PC-3 (cell line): ENCODE measurements at regions of chr4 and their contacts with region 1.

Region 1: DNA sequence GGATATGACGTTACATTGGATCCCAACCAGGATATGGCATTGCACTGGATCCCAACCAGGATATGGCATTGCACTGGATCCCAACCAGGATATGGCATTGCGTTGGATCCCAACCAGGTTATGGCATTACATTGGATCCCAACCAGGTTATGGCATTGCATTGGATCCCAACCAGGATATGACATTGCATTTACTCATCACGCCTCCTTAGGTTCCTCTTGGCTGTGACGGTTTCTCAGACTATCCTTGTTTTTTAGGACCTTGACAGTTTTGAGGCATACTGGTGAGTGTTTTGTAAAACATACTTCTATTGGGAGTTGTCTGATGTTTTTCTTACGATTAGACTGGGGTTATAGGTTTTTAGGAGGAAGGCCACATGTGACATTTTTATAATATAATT is 5.4 kb upstream of the ACSL1 start:
- DNase-seq: peak; percentile 86
- ATAC-seq: peak; percentile 72
- H3K4me3 ChIP-seq: no peak overlapping the region
- H3K27ac ChIP-seq: peak overlapping the region; percentile 76
- H3K4me1 ChIP-seq: peaks cover 14% of the 10 kb centered on the region
- H3K27me3 ChIP-seq: no peaks in the 10 kb centered on the region
- CTCF ChIP-seq: no peak

Region 2: DNA sequence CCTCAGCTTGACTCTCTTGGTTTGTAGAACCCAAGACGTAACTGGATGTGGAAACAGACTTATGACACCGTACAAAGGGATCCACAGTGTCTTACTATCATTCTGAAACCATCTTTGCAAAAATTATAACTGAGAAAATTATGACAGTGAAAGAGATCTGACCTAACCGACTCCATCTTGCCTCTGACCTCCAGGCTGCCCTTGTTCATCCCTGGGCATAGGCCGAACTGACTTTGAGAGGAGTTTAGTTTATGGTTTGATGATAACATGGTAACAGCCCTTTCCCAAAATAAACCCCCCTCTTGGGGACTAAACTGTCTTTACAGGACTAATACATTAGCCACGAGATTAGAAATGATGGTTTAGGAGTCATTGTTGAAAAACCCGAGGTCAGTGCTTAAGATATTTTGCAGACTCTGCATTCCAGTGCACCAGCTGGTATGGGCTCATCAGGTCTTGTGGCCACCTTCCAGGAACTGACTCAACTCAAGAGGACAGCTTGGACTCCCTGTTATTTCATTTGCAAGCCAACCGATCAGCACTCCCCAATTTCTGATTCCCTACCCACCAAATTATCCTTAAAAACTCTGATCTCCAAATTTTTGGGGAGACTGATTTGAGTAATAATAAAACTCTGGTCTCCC is 231.5 kb before region 1 on chr4:
- CTCF ChIA-PET with region 1: no interaction called
- POLR2A ChIA-PET with region 1: no interaction called
- intact Hi-C with region 1: no loop called
- DNase-seq: peak; percentile 37
- ATAC-seq: no peak
- H3K4me3 ChIP-seq: no peak overlapping the region
- H3K27ac ChIP-seq: no peak overlapping the region
- H3K4me1 ChIP-seq: no peaks in the 10 kb centered on the region
- H3K27me3 ChIP-seq: no peaks in the 10 kb centered on the region
- CTCF ChIP-seq: no peak

Region 3: DNA sequence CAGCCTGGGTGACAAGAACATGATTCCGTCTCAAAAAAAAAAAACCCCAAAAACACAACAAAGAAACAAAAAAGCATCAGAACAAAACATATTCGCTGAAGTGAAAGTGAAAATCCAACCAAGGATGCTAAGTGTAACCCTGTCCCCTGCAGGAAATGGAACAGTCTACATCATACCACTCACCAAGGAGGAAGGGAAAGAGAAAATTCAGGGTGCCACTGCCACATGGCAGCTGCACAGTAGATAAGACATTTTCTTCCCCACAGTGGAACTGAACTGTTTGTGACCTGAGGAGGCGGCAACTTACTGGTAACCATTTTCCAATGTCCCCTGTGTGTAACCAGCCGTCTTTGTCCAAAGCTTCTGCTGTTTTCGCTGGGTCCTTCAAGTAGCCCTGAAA is 69.1 kb before region 1 on chr4:
- CTCF ChIA-PET with region 1: no interaction called
- POLR2A ChIA-PET with region 1: no interaction called
- intact Hi-C with region 1: no loop called
- DNase-seq: no peak
- ATAC-seq: no peak
- H3K4me3 ChIP-seq: no peak overlapping the region
- H3K27ac ChIP-seq: no peak overlapping the region
- H3K4me1 ChIP-seq: no peaks in the 10 kb centered on the region
- H3K27me3 ChIP-seq: no peaks in the 10 kb centered on the region
- CTCF ChIP-seq: no peak

Region 4: GRCh38 chr4:184845367-184846021 is 14.3 kb after region 1 on chr4:
- CTCF ChIA-PET with region 1: no interaction called
- POLR2A ChIA-PET with region 1: no interaction called
- intact Hi-C with region 1: loop called (anchors 1 kb)
- DNase-seq: peak; percentile 79
- ATAC-seq: peak; percentile 87
- H3K4me3 ChIP-seq: no peak overlapping the region
- H3K27ac ChIP-seq: peak overlapping the region; percentile 98
- H3K4me1 ChIP-seq: peaks cover 19% of the 10 kb centered on the region
- H3K27me3 ChIP-seq: no peaks in the 10 kb centered on the region
- CTCF ChIP-seq: no peak

Region 5: DNA sequence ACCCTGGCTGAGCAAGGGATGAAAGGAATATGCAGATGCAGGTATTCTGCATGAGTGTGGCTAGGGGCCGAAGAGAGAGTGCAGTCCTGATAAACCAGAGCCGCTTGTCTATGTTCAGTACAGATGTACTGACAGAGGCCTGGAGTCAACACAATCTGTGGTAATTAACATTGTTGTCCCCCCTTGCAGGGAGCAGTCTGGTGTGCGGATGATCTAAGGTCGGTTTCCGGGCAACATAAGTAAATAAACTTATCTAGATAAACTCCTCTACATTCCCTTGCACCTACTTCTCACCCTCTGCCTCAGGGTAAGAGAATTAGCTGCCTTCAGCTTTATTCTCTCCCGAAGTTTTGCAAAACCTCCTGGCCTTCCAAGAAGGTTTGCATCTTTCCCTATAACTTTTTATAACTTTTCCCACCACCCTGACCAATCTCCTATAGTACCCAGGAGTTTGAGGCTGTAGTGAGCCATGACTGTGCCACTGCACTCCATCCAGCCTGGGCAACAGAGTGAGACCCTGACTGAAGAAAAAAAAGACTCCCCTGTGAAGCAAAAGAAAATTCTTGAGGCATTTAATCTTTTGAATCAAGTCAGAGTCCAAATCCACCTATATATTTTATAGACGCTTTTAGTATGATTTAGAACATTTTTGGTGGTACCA is 404.8 kb after region 1 on chr4:
- CTCF ChIA-PET with region 1: no interaction called
- POLR2A ChIA-PET with region 1: no interaction called
- intact Hi-C with region 1: no loop called
- DNase-seq: no peak
- ATAC-seq: no peak
- H3K4me3 ChIP-seq: no peak overlapping the region
- H3K27ac ChIP-seq: no peak overlapping the region
- H3K4me1 ChIP-seq: no peaks in the 10 kb centered on the region
- H3K27me3 ChIP-seq: no peaks in the 10 kb centered on the region
- CTCF ChIP-seq: no peak